ENCODE measurements at regions of chr12 and their contacts with region 1.

Region 1: GRCh38 chr12:110813285-110813684 is 33.5 kb upstream of the CCDC63 start:
- DNase-seq: no peak
- ATAC-seq: no peak
- H3K4me3 ChIP-seq: no peak overlapping the region
- H3K27ac ChIP-seq: no peak overlapping the region
- H3K4me1 ChIP-seq: no peaks in the 10 kb centered on the region
- H3K27me3 ChIP-seq: no peaks in the 10 kb centered on the region
- CTCF ChIP-seq: no peak
- POLR2A ChIP-seq: no peak

Region 2: DNA sequence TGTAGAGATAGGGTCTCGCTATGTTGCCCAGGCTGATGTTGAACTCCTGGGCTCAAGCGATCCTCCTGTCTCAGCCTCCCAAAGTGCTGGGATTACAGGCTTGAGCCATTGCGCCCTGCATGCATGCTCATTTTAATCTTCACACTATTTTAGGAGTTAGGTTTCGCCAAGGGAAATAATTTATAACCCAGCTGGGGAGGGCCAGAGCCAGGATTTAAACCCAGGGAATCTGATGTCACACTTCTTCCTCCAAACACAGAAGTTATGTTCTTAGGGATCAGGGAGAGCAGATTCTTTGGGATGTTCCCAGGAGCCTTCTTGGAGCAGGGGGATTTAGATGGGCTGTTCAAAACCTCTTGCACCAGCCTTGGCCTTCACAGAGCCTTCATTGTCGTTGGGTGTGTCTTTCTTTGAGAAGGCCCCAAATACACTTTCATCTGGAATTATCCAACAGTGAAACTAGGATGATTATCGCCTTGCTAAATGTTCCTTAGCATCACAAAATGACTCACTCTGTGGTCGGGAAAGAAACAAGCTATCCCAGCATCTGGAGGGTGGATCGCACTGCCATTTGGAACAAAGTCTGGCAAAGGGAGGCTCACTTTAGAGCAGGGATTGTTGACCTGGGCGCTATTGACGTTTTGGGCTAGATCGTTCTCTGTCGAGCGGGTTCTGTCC is 62.4 kb before region 1 on chr12:
- intact Hi-C with region 1: loop called in 1 of 10 experiments (anchors 10 kb)
- DNase-seq: peak in 2 of 5 donors; percentile 15 to 27
- ATAC-seq: peak; percentile 39 to 83 (median 76)
- H3K4me3 ChIP-seq: no peak overlapping the region
- H3K27ac ChIP-seq: peak overlapping the region in 9 of 12 donors; percentile 17 to 81 (median 46)
- H3K4me1 ChIP-seq: peaks cover 0 to 13% (median 4%) of the 10 kb centered on the region in 12 donors
- H3K27me3 ChIP-seq: no peaks in the 10 kb centered on the region
- CTCF ChIP-seq: no peak
- POLR2A ChIP-seq: no peak